CD14-positive monocyte (primary cell): ENCODE measurements at regions of chr16 and their contacts with region 1.

Region 1: DNA sequence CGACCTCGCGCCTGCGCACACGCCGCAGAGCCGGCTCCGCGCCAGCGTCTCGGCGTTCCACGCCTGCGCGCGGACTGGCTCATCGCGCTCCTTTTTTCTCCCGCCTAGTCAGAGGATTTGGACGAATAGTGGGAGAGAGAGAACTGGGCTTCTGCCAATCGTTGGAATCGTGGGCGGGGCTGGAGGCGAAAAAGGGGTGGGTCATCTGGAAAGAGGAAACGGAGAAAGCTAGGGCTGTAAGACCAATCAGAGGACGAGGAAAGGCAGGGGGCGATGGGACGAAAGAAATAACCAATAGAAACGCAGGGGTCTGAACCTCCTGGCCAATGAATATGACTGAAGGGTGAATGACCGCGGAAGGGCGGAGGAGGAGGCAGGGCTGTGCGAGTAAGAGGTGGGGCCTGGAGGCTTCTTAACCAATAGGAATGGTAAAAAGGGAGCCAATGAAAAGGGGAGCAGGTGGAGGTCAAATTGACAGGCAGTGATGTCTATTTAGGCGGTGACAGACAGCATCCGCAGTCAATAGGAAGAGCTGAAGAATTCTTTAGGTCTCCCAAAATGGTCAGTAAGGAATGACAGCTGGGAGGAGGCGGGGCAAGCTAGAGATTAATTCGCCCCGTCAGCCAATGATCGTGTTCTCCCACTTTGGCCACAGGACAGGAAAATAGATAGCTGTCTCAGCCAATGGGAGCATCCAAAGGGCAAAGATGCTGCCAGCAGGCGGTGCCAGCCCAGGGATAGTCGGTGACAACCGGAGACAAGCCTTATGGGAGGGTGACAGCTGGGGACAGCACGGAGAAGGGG is at the start of gene TBC1D10B:
- DNase-seq: peak; percentile 100
- H3K4me3 ChIP-seq: peak within 1 kb of the TSS; percentile 57 to 96 (median 60)
- H3K4me3 Mint-ChIP-seq: peak within 1 kb of the TSS; percentile 92 to 97
- H3K27ac ChIP-seq: peak within 1 kb of the TSS; percentile 86 to 88
- H3K27ac Mint-ChIP-seq: peak within 1 kb of the TSS; percentile 94 to 98 (median 97)
- H3K4me1 ChIP-seq: peaks cover 27 to 40% of the 10 kb centered on the region in 2 donors
- H3K4me1 Mint-ChIP-seq: peaks cover 43% of the 10 kb centered on the region
- H3K27me3 ChIP-seq: no peaks in the 10 kb centered on the region
- H3K27me3 Mint-ChIP-seq: peaks cover 0 to 6% (median 0%) of the 10 kb centered on the region in 3 donors
- CTCF ChIP-seq: no peak
- polyA plus RNA-seq, gene TBC1D10B: 12.2 to 36.0 (median 13.8) TPM

Region 2: DNA sequence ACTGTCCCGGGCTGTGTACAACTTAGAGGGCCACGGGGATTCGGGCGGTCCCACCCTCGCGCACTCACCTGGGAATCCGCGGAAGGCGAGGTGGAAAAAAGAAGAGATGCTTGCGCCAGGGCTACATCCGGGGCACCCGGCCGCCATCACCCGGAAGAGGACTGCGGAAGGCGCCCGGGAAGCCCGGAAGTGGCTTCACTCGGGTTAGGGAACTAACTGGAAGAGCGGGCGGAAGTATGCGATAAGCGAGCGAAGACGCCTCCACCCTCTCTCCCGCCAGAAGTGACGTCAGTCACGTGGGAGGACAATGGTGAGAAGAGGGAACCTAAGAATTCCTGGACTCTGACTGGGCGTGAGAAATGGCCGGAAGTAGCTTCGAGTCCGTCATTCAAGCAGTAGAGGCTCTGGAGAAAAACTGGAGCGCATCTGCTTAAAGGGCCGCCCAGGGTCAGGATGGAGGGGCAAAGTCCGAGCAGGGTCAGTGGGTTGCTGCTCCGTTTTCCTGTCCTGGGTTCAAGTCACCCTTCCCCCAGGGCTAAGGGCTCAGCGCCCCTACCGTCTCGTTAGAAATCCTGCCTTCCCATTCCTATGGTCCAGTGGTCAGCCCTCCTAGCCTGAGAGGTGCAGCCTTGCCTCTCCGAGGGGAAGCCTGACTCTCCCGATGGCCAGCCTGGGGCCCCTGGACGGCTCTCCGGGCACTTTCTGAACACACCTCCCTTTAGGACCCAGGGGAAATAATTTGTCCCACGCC is 15.3 kb before region 1 on chr16 and contains the start of gene CD2BP2:
- intact Hi-C with region 1: loop called in 1 of 2 experiments (anchors 2 kb)
- DNase-seq: peak; percentile 99 to 100 (median 100)
- H3K4me3 ChIP-seq: peak within 1 kb of the TSS; percentile 82 to 100 (median 96)
- H3K4me3 Mint-ChIP-seq: peak within 1 kb of the TSS; percentile 97 to 99
- H3K27ac ChIP-seq: peak within 1 kb of the TSS; percentile 94 to 99
- H3K27ac Mint-ChIP-seq: peak within 1 kb of the TSS; percentile 97 to 100 (median 99)
- H3K4me1 ChIP-seq: peaks cover 26 to 36% of the 10 kb centered on the region in 2 donors
- H3K4me1 Mint-ChIP-seq: peaks cover 34% of the 10 kb centered on the region
- H3K27me3 ChIP-seq: no peaks in the 10 kb centered on the region
- H3K27me3 Mint-ChIP-seq: peaks cover 0 to 1% (median 0%) of the 10 kb centered on the region in 3 donors
- CTCF ChIP-seq: no peak
- polyA plus RNA-seq, gene CD2BP2: 23.9 to 31.8 (median 31.0) TPM

Region 3: GRCh38 chr16:30407102-30407803 is 36.6 kb after region 1 on chr16 and contains the start of gene ZNF771:
- intact Hi-C with region 1: loop called in 1 of 2 experiments (anchors 2 kb)
- DNase-seq: peak; percentile 80 to 83 (median 81)
- H3K4me3 ChIP-seq: peak within 1 kb of the TSS; percentile 51 to 74 (median 58)
- H3K4me3 Mint-ChIP-seq: peak within 1 kb of the TSS; percentile 86 to 95
- H3K27ac ChIP-seq: peak within 1 kb of the TSS in 1 of 2 donors; percentile 8
- H3K27ac Mint-ChIP-seq: peak within 1 kb of the TSS; percentile 42 to 84 (median 57)
- H3K4me1 ChIP-seq: peaks cover 24 to 40% of the 10 kb centered on the region in 2 donors
- H3K4me1 Mint-ChIP-seq: peaks cover 28% of the 10 kb centered on the region
- H3K27me3 ChIP-seq: no peaks in the 10 kb centered on the region
- H3K27me3 Mint-ChIP-seq: peaks cover 0 to 4% (median 3%) of the 10 kb centered on the region in 3 donors
- CTCF ChIP-seq: no peak
- polyA plus RNA-seq, gene ZNF771: 0.39 to 0.68 (median 0.51) TPM

Region 4: GRCh38 chr16:30657866-30658730 is 287.5 kb after region 1 on chr16 and contains the start of gene FBRS:
- intact Hi-C with region 1: loop called in 1 of 2 experiments (anchors 10 kb)
- DNase-seq: peak; percentile 100
- H3K4me3 ChIP-seq: peak within 1 kb of the TSS; percentile 81 to 99 (median 86)
- H3K4me3 Mint-ChIP-seq: peak within 1 kb of the TSS; percentile 90 to 99
- H3K27ac ChIP-seq: peak within 1 kb of the TSS; percentile 93 to 99
- H3K27ac Mint-ChIP-seq: peak within 1 kb of the TSS; percentile 100
- H3K4me1 ChIP-seq: peaks cover 33 to 45% of the 10 kb centered on the region in 2 donors
- H3K4me1 Mint-ChIP-seq: peaks cover 38% of the 10 kb centered on the region
- H3K27me3 ChIP-seq: no peaks in the 10 kb centered on the region
- H3K27me3 Mint-ChIP-seq: peaks cover 0 to 1% (median 0%) of the 10 kb centered on the region in 3 donors
- CTCF ChIP-seq: peak; percentile 68
- polyA plus RNA-seq, gene FBRS: 1.4 to 44.8 (median 2.1) TPM

Region 5: DNA sequence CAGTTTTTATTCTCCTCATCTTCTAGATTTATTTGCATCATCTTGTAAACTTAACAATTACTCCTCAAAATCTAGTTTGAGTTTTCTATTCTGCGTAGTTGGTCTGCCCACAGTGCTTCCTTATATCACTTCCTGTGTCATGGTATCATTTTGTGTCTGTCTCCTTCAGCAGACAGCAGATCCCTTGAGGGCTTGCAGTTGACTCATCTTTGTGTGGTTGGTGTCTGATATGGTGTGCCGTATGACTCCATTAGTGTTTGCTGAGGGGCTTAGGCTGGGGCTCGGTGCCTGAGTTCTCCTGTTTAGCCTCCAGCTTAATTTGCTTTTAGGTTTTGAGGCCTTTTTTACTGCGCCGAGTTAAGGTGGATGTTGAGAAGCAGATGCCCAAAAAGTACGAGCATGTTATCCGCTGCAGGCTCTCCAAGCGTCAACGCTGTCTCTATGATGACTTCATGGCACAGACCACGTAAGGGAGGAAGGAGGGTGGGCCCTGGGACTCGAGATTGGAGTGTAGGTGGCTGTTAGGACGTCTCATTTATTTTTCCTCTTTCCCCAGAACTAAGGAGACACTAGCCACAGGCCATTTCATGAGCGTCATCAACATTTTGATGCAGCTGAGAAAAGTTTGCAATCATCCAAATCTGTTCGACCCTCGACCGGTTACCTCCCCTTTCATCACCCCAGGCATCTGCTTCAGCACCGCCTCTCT is 345.2 kb after region 1 on chr16:
- intact Hi-C with region 1: loop called in 1 of 2 experiments (anchors 10 kb)
- DNase-seq: peak; percentile 88 to 95 (median 94)
- H3K4me3 ChIP-seq: peak overlapping the region in 1 of 3 experiments; percentile 16
- H3K4me3 Mint-ChIP-seq: peak overlapping the region; percentile 2 to 67
- H3K27ac ChIP-seq: peak overlapping the region; percentile 92 to 98
- H3K27ac Mint-ChIP-seq: peak overlapping the region; percentile 97 to 99 (median 99)
- H3K4me1 ChIP-seq: peaks cover 39 to 41% of the 10 kb centered on the region in 2 donors
- H3K4me1 Mint-ChIP-seq: peaks cover 33% of the 10 kb centered on the region
- H3K27me3 ChIP-seq: no peaks in the 10 kb centered on the region
- H3K27me3 Mint-ChIP-seq: peaks cover 0 to 7% (median 0%) of the 10 kb centered on the region in 3 donors
- CTCF ChIP-seq: no peak